ENCODE measurements at regions of chr3 and their contacts with region 1.

Region 1: DNA sequence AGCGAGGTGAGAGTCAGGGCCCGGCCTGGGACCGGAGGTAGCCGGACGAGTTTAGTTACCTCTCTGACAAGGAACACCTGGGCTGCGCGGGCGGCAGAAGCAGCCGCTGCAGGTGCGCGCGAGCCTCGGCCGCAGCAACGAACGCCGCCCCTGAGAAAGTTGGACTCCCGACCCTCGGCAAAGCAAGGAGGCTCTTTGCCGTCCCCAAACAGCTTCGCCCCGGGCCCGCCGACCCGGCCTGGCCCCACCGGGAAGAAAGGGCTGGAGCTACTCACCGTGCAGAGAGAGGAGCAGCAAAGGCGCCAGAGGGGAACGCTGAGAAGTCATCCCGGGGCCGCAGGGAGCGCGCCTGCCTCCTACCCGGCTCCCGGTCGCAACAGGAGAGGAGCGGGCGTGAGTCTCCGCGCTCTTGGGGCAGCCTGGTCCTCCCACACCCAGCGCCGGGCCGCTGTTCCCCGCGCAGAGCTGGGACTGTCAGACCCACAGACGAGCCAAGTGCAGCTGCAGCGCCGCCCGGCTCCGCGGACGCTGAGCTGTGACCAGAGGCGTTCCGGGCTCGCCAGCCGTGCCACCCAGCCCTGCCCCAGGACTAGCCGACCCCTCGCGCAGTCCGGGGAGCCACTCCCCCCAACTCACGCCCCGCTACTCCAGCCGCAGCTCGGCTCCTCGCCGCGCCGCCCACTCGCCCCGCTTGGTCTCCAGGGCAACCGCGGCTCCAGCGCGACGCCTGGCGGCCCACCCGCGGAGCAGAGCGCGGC is at the start of gene IGSF11:
- DNase-seq: peak; percentile 39
- H3K4me3 Mint-ChIP-seq: peak within 1 kb of the TSS; percentile 72
- H3K27ac Mint-ChIP-seq: no peak within 1 kb of the TSS
- H3K4me1 Mint-ChIP-seq: peaks cover 4% of the 10 kb centered on the region
- H3K27me3 Mint-ChIP-seq: peaks cover 59% of the 10 kb centered on the region
- total RNA-seq, gene IGSF11: 0.21 TPM in 1 of 2 replicates, not detected in the other

Region 2: DNA sequence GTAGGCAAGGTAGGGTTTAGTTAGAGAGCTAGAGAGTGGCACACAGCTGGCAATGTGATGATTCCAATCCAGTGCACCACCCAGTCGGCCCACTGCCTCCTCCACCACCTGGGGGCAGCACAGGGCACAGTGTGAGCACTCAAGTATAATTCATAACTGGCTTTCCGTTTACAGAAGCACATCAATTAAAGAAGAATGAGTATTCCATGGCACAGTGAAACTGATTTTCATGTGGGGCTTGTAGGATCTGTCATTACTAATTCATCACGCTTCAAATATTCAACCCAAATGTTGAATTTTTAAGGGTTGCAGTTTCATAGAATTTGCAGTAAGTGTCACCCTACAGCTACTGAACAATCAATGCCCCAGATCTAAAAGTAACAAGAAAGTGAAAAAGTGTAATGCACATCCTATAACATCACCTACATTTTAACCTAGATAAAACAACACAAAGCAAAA is 149.7 kb before region 1 on chr3:
- intact Hi-C with region 1: loop called (anchors 1 kb)
- DNase-seq: peak; percentile 52
- H3K4me3 Mint-ChIP-seq: no peak overlapping the region
- H3K27ac Mint-ChIP-seq: no peak overlapping the region
- H3K4me1 Mint-ChIP-seq: no peaks in the 10 kb centered on the region
- H3K27me3 Mint-ChIP-seq: peaks cover 16% of the 10 kb centered on the region

Region 3: DNA sequence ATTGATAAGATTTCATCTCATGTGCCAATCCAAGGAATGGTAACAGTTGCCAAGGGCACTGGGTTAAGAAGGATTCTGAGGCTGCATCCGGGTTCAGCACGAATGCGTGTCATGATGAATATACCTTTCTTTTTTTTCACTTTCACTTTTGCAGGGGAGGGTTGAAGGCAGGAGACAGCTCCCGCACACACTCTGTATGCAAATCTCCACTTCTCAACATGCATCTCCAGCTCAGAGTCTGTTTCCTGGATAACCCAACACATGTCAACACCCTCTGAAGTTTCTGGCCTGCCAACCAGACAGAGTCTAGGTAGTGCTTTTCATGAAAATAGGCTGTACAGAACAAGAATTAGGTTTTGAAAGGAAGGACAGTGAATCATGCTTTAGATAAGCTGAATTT is 184.6 kb after region 1 on chr3:
- intact Hi-C with region 1: no loop called
- DNase-seq: peak; percentile 33
- H3K4me3 Mint-ChIP-seq: peak overlapping the region; percentile 14
- H3K27ac Mint-ChIP-seq: peak overlapping the region; percentile 73
- H3K4me1 Mint-ChIP-seq: peaks cover 12% of the 10 kb centered on the region
- H3K27me3 Mint-ChIP-seq: no peaks in the 10 kb centered on the region